ENCODE measurements at regions of chr10 and their contacts with region 1.

Region 1: DNA sequence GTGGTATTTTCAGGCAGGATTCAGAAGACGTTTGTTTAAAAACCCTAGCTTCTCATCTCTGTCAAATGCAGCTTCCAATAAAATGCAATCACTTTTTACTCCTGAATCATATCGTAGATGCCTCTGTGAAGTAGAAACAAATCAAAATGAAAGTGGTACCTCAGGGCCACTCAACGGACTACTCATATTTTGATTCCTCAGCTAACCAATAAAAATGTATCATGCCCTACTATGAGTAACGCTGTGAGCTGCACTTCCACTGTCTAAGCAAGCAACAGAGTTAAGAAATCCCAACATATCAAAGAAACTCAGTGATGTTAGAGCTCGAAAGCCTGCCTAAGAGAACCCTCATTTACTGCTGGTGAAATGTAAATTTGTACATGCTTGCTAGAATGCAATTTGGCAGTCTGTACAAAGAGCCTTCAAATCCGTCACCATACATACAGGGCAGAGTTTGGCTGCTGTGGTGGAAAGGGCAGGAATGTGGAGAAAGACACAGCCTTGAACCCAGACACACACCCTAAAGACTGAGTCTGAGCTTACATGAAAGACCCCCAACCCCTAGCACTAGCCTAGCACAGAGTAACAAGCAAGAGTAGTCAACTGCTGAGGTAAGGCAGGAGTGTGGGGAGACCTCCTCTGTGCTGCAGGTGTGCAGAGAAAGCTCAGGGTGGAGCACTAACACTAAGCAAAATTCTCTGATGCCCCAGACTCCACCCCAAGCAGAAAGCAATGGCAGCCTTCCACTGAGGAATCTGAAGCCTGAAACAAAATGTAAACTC is 151.5 kb downstream of the ANK3 start:
- DNase-seq: peak in 1 of 9 donors; percentile 3
- ATAC-seq: peak; percentile 44
- H3K4me3 ChIP-seq: peak overlapping the region; percentile 32
- H3K4me3 Mint-ChIP-seq: peak overlapping the region in 6 of 10 donors; percentile 17 to 81 (median 53)
- H3K27ac ChIP-seq: no peak overlapping the region
- H3K27ac Mint-ChIP-seq: peak overlapping the region in 5 of 9 donors; percentile 19 to 67 (median 25)
- H3K4me1 ChIP-seq: peaks cover 3 to 8% of the 10 kb centered on the region in 2 donors
- H3K4me1 Mint-ChIP-seq: peaks cover 29 to 44% (median 32%) of the 10 kb centered on the region in 7 donors
- H3K27me3 ChIP-seq: no peaks in the 10 kb centered on the region
- H3K27me3 Mint-ChIP-seq: no peaks in the 10 kb centered on the region

Region 2: DNA sequence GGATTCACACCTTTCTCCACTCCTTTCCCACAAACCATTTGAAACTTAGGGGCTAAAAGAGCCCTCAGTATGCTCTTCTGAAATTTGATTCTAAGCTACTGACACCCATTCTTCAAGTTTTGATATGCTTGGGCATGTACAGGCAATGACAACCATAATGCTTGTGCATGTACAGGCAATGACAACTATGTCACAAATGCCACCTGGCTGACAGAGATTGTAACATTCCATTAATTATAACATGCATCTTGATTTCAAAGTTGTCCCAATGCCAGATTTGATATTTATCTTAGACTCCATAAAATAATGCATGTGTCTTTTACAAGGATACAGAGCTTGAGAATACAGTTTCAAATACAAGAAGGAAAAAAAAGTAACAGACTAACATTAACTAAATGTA is 522.6 kb after region 1 on chr10:
- CTCF ChIA-PET with region 1: no interaction called
- POLR2A ChIA-PET with region 1: no interaction called
- intact Hi-C with region 1: loop called in 1 of 2 experiments (anchors 10 kb)
- DNase-seq: no peak
- ATAC-seq: no peak
- H3K4me3 ChIP-seq: no peak overlapping the region
- H3K4me3 Mint-ChIP-seq: no peak overlapping the region
- H3K27ac ChIP-seq: no peak overlapping the region
- H3K27ac Mint-ChIP-seq: no peak overlapping the region
- H3K4me1 ChIP-seq: no peaks in the 10 kb centered on the region
- H3K4me1 Mint-ChIP-seq: peaks cover 0 to 6% (median 0%) of the 10 kb centered on the region in 7 donors
- H3K27me3 ChIP-seq: no peaks in the 10 kb centered on the region
- H3K27me3 Mint-ChIP-seq: peaks cover 8 to 18% (median 9%) of the 10 kb centered on the region in 5 donors

Measured in naive thymus-derived CD4-positive, alpha-beta T cell (primary cell).